ENCODE measurements at regions of chr1 and their contacts with region 1.

Region 1: GRCh38 chr1:56434740-56435139 is 144.6 kb downstream of the PLPP3 start:
- DNase-seq: no peak
- H3K4me3 ChIP-seq: no peak overlapping the region
- H3K27ac ChIP-seq: peak overlapping the region in 57 of 59 donors; percentile 69 to 99 (median 95)
- H3K27me3 ChIP-seq: peaks cover 0 to 2% (median 0%) of the 10 kb centered on the region in 45 donors
- CTCF ChIP-seq: peak in 6 of 56 donors; percentile 7 to 26 (median 14)

Region 2: GRCh38 chr1:56229186-56229585 is 205.6 kb before region 1 on chr1:
- intact Hi-C with region 1: no loop called
- DNase-seq: no peak
- H3K4me3 ChIP-seq: no peak overlapping the region
- H3K27ac ChIP-seq: no peak overlapping the region
- H3K27me3 ChIP-seq: peaks cover 0 to 4% (median 0%) of the 10 kb centered on the region in 45 donors
- CTCF ChIP-seq: no peak

Region 3: GRCh38 chr1:56472860-56473259 is 38.1 kb after region 1 on chr1:
- intact Hi-C with region 1: loop called in 1 of 2 experiments (anchors 5 kb)
- DNase-seq: no peak
- H3K4me3 ChIP-seq: no peak overlapping the region
- H3K27ac ChIP-seq: no peak overlapping the region
- H3K27me3 ChIP-seq: peaks cover 0 to 9% (median 0%) of the 10 kb centered on the region in 45 donors
- CTCF ChIP-seq: no peak

Region 4: DNA sequence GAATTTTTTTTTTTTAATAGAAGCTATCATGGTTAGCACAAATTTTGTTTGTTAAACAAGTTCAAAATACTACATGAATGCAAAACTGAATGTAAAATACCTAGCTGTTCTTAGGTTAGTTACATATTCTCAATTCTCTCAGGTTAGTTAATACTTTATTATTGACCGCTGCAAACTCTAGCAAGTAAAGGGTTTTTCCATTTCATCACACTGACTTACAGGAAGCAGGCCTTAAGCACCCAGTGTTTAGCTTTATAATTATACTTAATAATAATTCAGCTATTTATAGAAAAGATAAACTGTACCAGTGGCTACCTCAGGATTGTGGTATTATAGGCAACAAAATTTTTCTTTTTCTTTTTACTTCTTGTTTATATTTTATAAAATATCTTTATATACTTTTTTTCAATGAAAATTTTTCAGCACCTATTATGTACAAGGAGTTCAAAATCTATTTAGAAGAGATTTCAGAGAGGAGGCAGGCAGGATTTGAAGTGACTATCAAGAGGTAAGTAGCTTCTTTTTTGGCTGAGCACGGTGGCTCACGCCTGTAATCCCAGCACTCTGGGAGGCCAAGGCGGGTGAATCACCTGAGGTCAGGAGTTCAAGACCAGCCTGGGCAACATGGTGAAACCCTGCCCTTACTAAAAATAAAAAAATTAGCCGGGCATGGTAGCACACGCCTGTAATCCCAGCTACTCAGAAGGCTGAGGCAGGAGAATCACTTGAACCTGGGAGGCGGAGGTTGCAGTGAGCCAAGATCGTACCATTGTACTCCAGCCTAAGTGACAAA is 126.7 kb after region 1 on chr1:
- intact Hi-C with region 1: loop called in 1 of 2 experiments (anchors 5 kb)
- DNase-seq: no peak
- H3K4me3 ChIP-seq: no peak overlapping the region
- H3K27ac ChIP-seq: peak overlapping the region in 31 of 59 donors; percentile 16 to 93 (median 55)
- H3K27me3 ChIP-seq: no peaks in the 10 kb centered on the region
- CTCF ChIP-seq: no peak

Measured in dorsolateral prefrontal cortex (tissue), 120 donors.